ENCODE measurements at regions of chr2 and their contacts with region 1.

Region 1: GRCh38 chr2:158745044-158745865 is 49.9 kb upstream of the DAPL1 start:
- DNase-seq: peak; percentile 58
- H3K4me3 ChIP-seq: no peak overlapping the region
- H3K27ac ChIP-seq: no peak overlapping the region
- H3K4me1 ChIP-seq: peaks cover 0 to 12% of the 10 kb centered on the region in 2 experiments; a peak in 1 of 4 replicates
- H3K27me3 ChIP-seq: no peaks in the 10 kb centered on the region
- CTCF ChIP-seq: peak; percentile 72
- EP300 ChIP-seq: no peak
- RAD21 ChIP-seq: peak; percentile 92

Region 2: DNA sequence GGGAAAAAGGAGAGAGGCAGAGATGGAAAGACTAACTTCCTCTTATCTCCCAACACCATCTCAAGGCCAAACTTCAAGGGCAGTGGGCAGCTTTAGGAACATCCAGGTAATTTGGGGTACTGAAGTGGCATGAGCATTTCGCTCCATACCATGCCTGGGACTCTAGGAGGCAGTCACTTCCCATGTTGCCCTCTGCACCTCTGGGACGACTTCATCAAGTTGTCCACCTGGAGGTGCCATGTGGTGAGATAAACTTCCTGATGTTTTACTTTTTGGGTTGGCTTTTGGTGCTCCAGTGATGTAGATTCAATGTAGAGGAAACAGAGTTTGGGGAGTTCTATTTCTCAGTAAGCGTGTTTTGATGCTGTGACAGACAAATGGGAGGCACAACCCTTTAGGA is 699.9 kb before region 1 on chr2:
- CTCF ChIA-PET with region 1: interaction called, 16 read pairs
- POLR2A ChIA-PET with region 1: no interaction called
- DNase-seq: no peak
- H3K4me3 ChIP-seq: no peak overlapping the region
- H3K27ac ChIP-seq: no peak overlapping the region
- H3K4me1 ChIP-seq: peaks cover 11 to 23% of the 10 kb centered on the region in 2 experiments; a peak in 3 of 4 replicates
- H3K27me3 ChIP-seq: no peaks in the 10 kb centered on the region
- CTCF ChIP-seq: no peak
- EP300 ChIP-seq: no peak
- RAD21 ChIP-seq: peak; percentile 24

Region 3: DNA sequence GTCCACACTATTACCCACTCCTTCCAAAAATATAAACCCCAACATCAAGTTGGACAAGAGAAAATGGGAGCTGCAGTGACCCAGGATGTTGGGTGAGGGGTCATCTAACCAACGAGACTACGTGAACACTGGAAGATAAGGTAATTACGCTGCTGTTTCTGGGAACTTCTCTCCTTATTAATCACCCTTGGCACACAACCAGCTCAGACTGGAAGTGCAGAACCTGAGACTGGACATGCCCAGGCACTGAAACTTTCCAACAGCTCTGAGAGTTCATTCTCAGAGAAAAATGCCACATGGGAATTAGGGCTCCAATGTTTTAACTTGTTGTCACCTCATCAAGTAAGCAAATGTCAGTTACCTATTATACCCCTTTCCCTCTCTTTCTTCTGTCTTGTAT is 424.0 kb before region 1 on chr2:
- CTCF ChIA-PET with region 1: no interaction called
- POLR2A ChIA-PET with region 1: no interaction called
- DNase-seq: no peak
- H3K4me3 ChIP-seq: no peak overlapping the region
- H3K27ac ChIP-seq: no peak overlapping the region
- H3K4me1 ChIP-seq: peaks cover 0 to 5% of the 10 kb centered on the region in 2 experiments; a peak in 2 of 4 replicates
- H3K27me3 ChIP-seq: no peaks in the 10 kb centered on the region
- CTCF ChIP-seq: no peak
- EP300 ChIP-seq: no peak
- RAD21 ChIP-seq: no peak

Region 4: DNA sequence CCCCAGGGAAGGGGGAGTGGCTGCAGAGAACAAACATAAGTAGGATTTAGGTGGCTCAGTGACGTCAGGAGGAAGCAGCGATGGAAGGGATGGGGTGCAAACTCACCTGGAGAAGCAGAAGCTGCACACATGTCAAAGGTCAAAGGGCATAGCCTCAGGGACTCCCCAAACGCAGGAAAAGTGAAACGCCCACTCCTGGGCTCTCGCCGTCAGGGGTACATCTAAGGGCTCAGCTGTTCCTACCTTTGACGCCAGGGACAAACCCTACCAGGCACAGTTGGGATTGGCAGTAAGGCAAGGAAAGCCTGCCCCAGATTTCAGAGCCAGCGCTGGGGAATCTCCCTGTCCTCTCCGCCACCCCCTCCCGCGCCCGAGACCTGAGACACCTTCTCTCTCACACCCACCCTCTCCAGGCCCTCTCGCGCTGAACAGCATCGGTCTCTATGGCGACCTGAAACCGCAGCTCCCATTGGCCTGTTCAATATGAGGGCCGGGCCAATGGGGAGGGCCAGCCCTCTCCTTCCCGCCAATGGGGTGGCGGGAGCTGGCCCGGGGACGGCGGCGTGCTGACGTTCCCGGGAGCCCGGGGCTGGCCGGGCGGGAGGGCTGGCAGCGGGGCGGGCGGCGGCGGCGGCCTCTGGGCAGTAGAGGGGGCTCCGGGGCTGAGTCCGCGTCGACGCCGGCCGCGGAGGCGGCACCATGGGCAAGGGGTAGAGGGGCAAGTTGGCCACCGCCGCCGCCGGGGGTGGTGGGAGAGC is 288.8 kb before region 1 on chr2 and contains the starts of genes CCDC148 and PKP4:
- CTCF ChIA-PET with region 1: interaction called, 61 read pairs
- POLR2A ChIA-PET with region 1: no interaction called
- DNase-seq: peak; percentile 95
- H3K4me3 ChIP-seq: peak within 1 kb of the TSS; percentile 76 to 77
- H3K27ac ChIP-seq: peak within 1 kb of the TSS; percentile 72 to 87
- H3K4me1 ChIP-seq: peaks cover 15 to 23% of the 10 kb centered on the region in 2 experiments; a peak in 3 of 4 replicates
- H3K27me3 ChIP-seq: no peaks in the 10 kb centered on the region
- CTCF ChIP-seq: 0 out of 2 replicates have a peak, but pooled peaks have one; percentile 7
- EP300 ChIP-seq: no peak
- RAD21 ChIP-seq: no peak
- polyA plus RNA-seq, gene CCDC148: 0.18 TPM in 1 of 2 replicates, not detected in the other
- polyA plus RNA-seq, gene PKP4: 10.9 and 13.8 TPM in 2 replicates

Region 5: DNA sequence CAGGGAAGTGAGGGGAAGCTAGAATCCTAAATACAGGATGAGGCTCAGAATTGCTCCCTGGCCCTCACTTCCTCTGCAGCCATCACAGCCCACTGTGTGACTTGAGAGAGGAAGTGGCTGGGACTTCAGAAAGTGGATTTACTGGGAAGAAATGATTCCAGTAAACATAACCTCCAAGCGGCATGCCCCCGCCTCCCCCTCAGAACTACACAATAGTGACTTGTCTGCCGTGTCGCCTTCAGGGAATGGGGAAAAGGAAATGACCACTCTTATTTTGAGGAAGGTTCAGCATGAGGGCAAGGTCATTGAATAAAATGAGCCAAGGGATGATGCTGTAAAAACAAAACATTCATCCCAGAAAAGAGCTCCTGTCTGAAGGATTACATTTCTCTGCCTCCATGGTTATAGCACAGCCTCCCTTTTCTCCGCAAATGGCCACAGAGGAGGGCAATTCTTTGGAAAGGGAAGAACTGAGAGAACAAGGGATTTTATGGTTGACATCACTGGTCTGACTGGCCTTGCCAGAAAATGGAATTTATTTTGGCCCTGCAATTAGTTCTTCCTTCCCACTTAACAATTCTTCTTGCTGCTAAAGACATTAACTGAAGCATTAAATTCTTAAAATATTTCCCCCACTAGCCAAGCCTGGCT is 29.0 kb before region 1 on chr2:
- CTCF ChIA-PET with region 1: interaction called, 10 read pairs
- POLR2A ChIA-PET with region 1: no interaction called
- DNase-seq: no peak
- H3K4me3 ChIP-seq: no peak overlapping the region
- H3K27ac ChIP-seq: no peak overlapping the region
- H3K4me1 ChIP-seq: no peaks in the 10 kb centered on the region; a peak in 1 of 4 replicates
- H3K27me3 ChIP-seq: no peaks in the 10 kb centered on the region
- CTCF ChIP-seq: no peak
- EP300 ChIP-seq: no peak
- RAD21 ChIP-seq: no peak

Region 6: GRCh38 chr2:158733430-158733755 is 11.9 kb before region 1 on chr2:
- CTCF ChIA-PET with region 1: interaction called, 16 read pairs
- POLR2A ChIA-PET with region 1: no interaction called
- DNase-seq: no peak
- H3K4me3 ChIP-seq: no peak overlapping the region
- H3K27ac ChIP-seq: no peak overlapping the region
- H3K4me1 ChIP-seq: no peaks in the 10 kb centered on the region
- H3K27me3 ChIP-seq: no peaks in the 10 kb centered on the region; the same call in 1 of the 2 replicates
- CTCF ChIP-seq: no peak
- EP300 ChIP-seq: no peak
- RAD21 ChIP-seq: no peak

Measured in SK-N-SH (cell line).